CD8-positive, alpha-beta T cell (primary cell): ENCODE measurements at regions of chr17 and their contacts with region 1.

Region 1: GRCh38 chr17:63798572-63799106 is 24.7 kb downstream of the DDX42 start:
- DNase-seq: no peak
- ATAC-seq: no peak
- H3K4me3 ChIP-seq: no peak overlapping the region
- H3K4me3 Mint-ChIP-seq: no peak overlapping the region
- H3K27ac ChIP-seq: no peak overlapping the region
- H3K27ac Mint-ChIP-seq: no peak overlapping the region
- H3K4me1 ChIP-seq: no peaks in the 10 kb centered on the region
- H3K4me1 Mint-ChIP-seq: peaks cover 3% of the 10 kb centered on the region
- H3K27me3 ChIP-seq: no peaks in the 10 kb centered on the region
- H3K27me3 Mint-ChIP-seq: no peaks in the 10 kb centered on the region
- CTCF ChIP-seq: no peak

Region 2: DNA sequence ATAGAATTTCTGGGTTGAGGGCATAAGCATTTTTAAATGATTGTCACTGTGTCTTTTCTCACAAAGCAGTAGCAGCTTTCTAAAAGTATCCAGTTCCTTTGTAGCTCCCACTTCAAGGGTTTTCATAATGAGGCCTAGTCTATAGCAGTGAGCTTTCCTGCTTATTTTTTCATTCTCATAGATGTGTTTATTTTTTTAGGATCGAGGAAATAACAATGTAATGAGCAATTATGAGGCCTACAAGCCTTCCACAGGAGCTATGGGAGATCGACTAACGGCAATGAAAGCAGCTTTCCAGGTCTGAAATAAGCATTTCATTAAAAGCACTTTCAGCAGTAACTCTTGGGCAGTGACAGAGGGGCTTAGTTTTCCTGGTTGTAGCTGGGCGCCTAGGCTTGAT is 18.0 kb after region 1 on chr17:
- CTCF ChIA-PET with region 1: interaction called, 3 read pairs
- POLR2A ChIA-PET with region 1: interaction called, 3 read pairs
- intact Hi-C with region 1: loop called in 1 of 2 experiments (anchors 2 kb)
- DNase-seq: no peak
- ATAC-seq: no peak
- H3K4me3 ChIP-seq: no peak overlapping the region
- H3K4me3 Mint-ChIP-seq: no peak overlapping the region
- H3K27ac ChIP-seq: no peak overlapping the region
- H3K27ac Mint-ChIP-seq: no peak overlapping the region
- H3K4me1 ChIP-seq: no peaks in the 10 kb centered on the region
- H3K4me1 Mint-ChIP-seq: peaks cover 6% of the 10 kb centered on the region
- H3K27me3 ChIP-seq: no peaks in the 10 kb centered on the region
- H3K27me3 Mint-ChIP-seq: no peaks in the 10 kb centered on the region
- CTCF ChIP-seq: no peak